Activated CD4-positive, alpha-beta T cell treated with anti-CD3 and anti-CD28 coated beads, Interleukin-2, amount 10 ng/mL, durations not matched to agents 7 days and 5 days (primary cell): ENCODE measurements at regions of chr12 and their contacts with region 1.

Region 1: DNA sequence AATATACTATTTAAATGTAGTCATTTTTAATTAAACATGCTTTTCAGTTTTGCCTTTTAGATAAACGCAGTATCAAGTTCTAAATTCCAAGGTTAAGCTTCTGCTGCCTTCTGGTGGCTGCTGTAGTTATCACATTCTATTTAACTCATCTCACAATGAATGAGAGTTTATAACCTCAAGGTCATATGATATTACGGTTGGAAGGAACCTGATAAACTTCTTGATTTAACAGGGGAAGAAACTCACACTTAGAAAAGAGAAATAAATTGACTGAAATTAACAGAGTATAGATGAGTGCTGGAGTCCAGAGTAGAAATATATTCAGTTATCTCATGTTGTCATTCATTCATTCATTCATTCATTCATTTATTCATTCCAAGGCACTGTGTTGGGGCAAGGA is 31.9 kb downstream of the GUCY2C start:
- DNase-seq: peak; percentile 61
- H3K4me3 Mint-ChIP-seq: no peak overlapping the region
- H3K27ac Mint-ChIP-seq: no peak overlapping the region
- H3K4me1 Mint-ChIP-seq: peaks cover 11% of the 10 kb centered on the region
- H3K27me3 Mint-ChIP-seq: peaks cover 2% of the 10 kb centered on the region

Region 2: DNA sequence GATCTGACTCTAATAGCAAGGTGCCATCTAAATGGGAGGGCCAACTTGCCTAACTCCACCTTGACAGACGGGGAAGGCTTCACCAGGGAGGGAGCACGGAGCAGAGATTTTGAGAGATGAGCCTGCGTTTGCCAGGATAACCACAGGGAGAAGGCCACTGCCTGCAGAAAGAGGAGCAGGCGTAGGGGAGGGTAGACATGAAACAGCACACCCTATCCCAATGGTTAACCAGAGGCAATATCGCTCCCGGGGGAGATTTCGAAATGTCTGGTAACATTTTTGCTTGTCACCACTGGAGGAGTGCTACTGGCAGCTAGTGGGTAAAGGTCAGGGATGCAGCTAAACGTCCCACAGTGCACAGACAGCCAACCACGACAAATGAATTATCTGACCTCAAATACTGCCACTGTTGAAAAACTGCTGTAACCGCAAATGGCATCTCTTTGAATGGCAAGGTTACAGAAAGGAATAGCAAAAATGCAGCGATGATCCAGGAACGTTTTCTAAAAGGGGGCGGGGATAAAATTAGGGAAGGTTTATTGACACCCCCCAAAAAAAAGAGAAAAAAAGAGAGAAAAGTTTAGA is 425.1 kb before region 1 on chr12:
- CTCF ChIA-PET with region 1: interaction called, 13 read pairs
- POLR2A ChIA-PET with region 1: no interaction called
- DNase-seq: peak; percentile 41
- H3K4me3 Mint-ChIP-seq: peak overlapping the region; percentile 64
- H3K27ac Mint-ChIP-seq: peak overlapping the region; percentile 89
- H3K4me1 Mint-ChIP-seq: peaks cover 23% of the 10 kb centered on the region
- H3K27me3 Mint-ChIP-seq: no peaks in the 10 kb centered on the region

Region 3: DNA sequence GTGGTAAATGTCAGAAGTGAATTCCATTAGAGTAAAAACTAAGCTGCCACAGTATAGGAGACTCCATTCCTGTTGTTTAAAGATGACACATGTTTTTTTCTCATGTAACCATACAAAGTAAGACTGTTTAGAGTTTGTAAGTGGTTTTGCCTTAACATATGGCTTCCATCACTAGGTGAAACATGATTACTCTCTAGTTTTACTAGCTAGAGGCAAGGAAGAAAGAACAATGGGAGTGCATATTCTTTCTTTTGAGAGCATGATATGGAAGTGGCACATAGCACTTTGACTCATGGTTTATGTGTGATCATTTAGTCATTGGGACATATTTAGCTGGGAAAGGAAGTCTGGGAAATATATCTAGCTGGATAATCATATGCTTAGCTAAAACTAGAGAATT is 291.3 kb before region 1 on chr12:
- CTCF ChIA-PET with region 1: no interaction called
- POLR2A ChIA-PET with region 1: no interaction called
- DNase-seq: no peak
- H3K4me3 Mint-ChIP-seq: no peak overlapping the region
- H3K27ac Mint-ChIP-seq: no peak overlapping the region
- H3K4me1 Mint-ChIP-seq: peaks cover 48% of the 10 kb centered on the region
- H3K27me3 Mint-ChIP-seq: no peaks in the 10 kb centered on the region

Region 4: GRCh38 chr12:14629832-14630710 is 34.4 kb before region 1 on chr12:
- CTCF ChIA-PET with region 1: interaction called, 12 read pairs
- POLR2A ChIA-PET with region 1: no interaction called
- DNase-seq: peak; percentile 70
- H3K4me3 Mint-ChIP-seq: no peak overlapping the region
- H3K27ac Mint-ChIP-seq: no peak overlapping the region
- H3K4me1 Mint-ChIP-seq: peaks cover 1% of the 10 kb centered on the region
- H3K27me3 Mint-ChIP-seq: peaks cover 8% of the 10 kb centered on the region

Region 5: DNA sequence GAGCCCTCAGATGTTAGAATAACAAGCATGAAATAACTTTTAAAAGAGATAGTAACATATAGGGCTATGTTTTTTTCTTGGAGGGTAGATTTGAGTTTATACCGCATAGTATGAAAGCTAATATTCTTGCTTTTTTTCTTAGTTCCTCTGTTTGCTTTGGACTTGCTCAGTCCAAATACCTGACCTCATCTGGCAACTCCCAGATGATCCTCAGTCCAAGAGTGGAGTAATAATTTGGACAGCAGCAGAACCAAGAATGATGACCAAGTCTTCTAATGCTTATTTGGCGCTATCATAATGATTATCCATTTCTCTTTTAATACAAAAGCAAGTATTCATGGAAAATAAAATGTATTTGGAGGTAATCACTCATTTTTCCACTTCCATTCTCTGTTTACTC is 13.7 kb before region 1 on chr12:
- CTCF ChIA-PET with region 1: no interaction called
- POLR2A ChIA-PET with region 1: no interaction called
- DNase-seq: no peak
- H3K4me3 Mint-ChIP-seq: no peak overlapping the region
- H3K27ac Mint-ChIP-seq: no peak overlapping the region
- H3K4me1 Mint-ChIP-seq: peaks cover 7% of the 10 kb centered on the region
- H3K27me3 Mint-ChIP-seq: peaks cover 2% of the 10 kb centered on the region